PC-9 (cell line): ENCODE measurements at regions of chr1 and their contacts with region 1.

Region 1: DNA sequence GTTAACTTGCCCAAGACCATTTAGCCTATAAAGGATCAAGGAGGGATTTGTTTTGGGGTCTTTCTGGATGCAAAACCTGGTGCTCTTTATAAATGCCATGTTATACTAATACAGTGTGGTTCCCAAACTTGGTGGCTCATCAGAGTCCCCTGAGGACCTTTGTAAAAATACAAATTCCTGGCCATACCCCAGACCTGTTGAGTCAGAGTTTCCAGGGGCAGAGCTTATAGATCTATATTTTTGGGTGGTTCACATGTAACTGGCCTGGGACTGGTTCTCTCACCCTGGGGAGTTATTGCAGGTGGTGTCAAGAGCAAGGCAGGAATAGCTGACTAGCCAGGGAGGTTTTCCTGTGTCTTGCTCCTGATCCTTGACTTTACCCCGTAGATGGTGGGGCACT is 136.9 kb upstream of the HNRNPU start:
- DNase-seq: no peak
- H3K4me3 ChIP-seq: no peak overlapping the region
- H3K27ac ChIP-seq: no peak overlapping the region
- H3K4me1 ChIP-seq: no peaks in the 10 kb centered on the region
- H3K27me3 ChIP-seq: no peaks in the 10 kb centered on the region
- CTCF ChIP-seq: no peak

Region 2: DNA sequence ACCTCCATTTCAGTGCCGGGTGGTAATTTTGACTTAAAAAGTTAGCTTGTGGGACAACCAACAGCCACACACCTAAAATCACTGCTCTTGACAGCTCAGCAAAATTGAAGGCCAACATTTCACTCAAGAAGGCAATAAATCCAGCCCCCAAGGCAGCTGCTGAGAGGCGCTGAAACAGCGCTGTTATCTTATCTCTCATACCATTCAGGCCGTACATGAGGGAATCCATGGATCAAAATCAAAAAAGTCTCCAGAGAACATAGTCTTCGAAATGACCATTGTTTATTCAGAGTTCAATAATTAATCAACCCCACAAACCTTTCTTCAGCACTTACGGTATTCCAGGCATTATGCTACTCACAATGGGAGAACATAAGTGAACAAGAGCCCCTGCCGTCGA is 911.7 kb before region 1 on chr1:
- CTCF ChIA-PET with region 1: no interaction called
- POLR2A ChIA-PET with region 1: interaction called, 12 read pairs
- intact Hi-C with region 1: no loop called
- DNase-seq: no peak
- H3K4me3 ChIP-seq: no peak overlapping the region
- H3K27ac ChIP-seq: no peak overlapping the region
- H3K4me1 ChIP-seq: no peaks in the 10 kb centered on the region
- H3K27me3 ChIP-seq: no peaks in the 10 kb centered on the region
- CTCF ChIP-seq: no peak